Aorta (tissue), 5 donors: ENCODE measurements at regions of chr19 and their contacts with region 1.

Region 1: GRCh38 chr19:2610637-2611482 is 91.6 kb downstream of the GNG7 start:
- DNase-seq: peak; percentile 96 to 99
- ATAC-seq: peak; percentile 94
- H3K4me3 ChIP-seq: peak overlapping the region in 1 of 2 donors; percentile 13
- H3K27ac ChIP-seq: peak overlapping the region; percentile 23 to 94
- H3K4me1 ChIP-seq: no peaks in the 10 kb centered on the region
- H3K27me3 ChIP-seq: no peaks in the 10 kb centered on the region

Region 2: GRCh38 chr19:2427429-2428320 is 183.2 kb before region 1 on chr19 and contains the start of gene TIMM13:
- intact Hi-C with region 1: loop called in 1 of 2 experiments (anchors 5 kb)
- DNase-seq: peak; percentile 98 to 99
- ATAC-seq: peak; percentile 96
- H3K4me3 ChIP-seq: peak within 1 kb of the TSS; percentile 45 to 76
- H3K27ac ChIP-seq: peak within 1 kb of the TSS; percentile 51 to 85
- H3K4me1 ChIP-seq: no peaks in the 10 kb centered on the region
- H3K27me3 ChIP-seq: no peaks in the 10 kb centered on the region
- total RNA-seq, gene TIMM13: 27.8 to 32.7 TPM

Region 3: DNA sequence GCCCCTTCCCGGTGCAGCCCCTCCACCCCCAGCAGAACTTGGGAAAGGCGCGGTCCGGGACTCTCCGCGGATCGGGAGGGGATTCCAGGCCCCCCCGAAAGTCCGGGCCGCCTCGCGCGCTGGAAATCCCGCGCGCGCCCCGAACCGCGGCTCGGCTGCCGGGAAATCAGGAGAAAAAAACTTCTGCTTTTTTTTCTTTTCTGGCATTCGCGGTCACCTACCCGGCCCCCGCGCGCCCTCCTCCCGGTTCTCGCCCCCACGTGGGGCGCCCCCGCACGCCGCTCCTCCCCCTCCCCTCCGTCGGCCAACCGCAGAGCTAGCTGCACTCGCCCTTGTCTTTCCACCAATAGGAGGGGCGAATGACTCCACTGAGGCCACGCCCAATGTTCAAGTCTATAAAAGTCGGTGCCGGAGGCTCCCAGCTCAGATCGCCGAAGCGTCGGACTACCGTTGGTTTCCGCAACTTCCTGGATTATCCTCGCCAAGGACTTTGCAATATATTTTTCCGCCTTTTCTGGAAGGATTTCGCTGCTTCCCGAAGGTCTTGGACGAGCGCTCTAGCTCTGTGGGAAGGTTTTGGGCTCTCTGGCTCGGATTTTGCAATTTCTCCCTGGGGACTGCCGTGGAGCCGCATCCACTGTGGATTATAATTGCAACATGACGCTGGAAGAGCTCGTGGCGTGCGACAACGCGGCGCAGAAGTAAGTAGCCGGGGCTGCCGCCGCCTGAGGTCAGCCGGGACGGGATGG is 135.0 kb before region 1 on chr19 and contains the start of gene GADD45B:
- intact Hi-C with region 1: loop called (anchors 1 to 2 kb)
- DNase-seq: peak; percentile 99
- ATAC-seq: peak; percentile 92
- H3K4me3 ChIP-seq: peak within 1 kb of the TSS; percentile 44 to 87
- H3K27ac ChIP-seq: peak within 1 kb of the TSS; percentile 62 to 95
- H3K4me1 ChIP-seq: no peaks in the 10 kb centered on the region
- H3K27me3 ChIP-seq: no peaks in the 10 kb centered on the region
- total RNA-seq, gene GADD45B: 99.5 to 185 TPM

Region 4: DNA sequence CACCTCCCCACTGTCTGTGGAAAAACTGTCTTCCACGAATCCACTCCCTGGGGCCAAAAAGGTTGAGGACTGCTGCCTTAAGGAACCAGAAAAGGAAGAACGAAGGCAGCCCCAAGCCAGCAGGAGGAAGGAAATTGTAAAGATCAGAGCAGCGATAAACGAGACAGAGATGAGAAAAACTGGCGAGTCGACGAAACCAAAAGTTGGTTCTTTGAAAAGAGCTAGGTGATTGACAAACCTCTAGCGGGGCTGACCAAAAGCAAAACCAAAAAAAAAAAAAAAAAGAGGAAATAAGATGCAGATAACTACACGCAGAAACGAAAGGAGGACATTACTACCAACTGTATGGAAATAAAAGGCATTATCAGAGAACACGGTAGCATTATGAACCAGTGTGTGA is 58.0 kb before region 1 on chr19:
- intact Hi-C with region 1: no loop called
- DNase-seq: peak; percentile 14 to 47
- ATAC-seq: no peak
- H3K4me3 ChIP-seq: no peak overlapping the region
- H3K27ac ChIP-seq: no peak overlapping the region
- H3K4me1 ChIP-seq: no peaks in the 10 kb centered on the region
- H3K27me3 ChIP-seq: no peaks in the 10 kb centered on the region

Region 5: GRCh38 chr19:2627319-2627829 is 16.5 kb after region 1 on chr19:
- intact Hi-C with region 1: loop called in 1 of 2 experiments (anchors 1 kb)
- DNase-seq: peak; percentile 92 to 94
- ATAC-seq: peak; percentile 81
- H3K4me3 ChIP-seq: no peak overlapping the region
- H3K27ac ChIP-seq: peak overlapping the region in 1 of 2 donors; percentile 81
- H3K4me1 ChIP-seq: no peaks in the 10 kb centered on the region
- H3K27me3 ChIP-seq: no peaks in the 10 kb centered on the region

Region 6: DNA sequence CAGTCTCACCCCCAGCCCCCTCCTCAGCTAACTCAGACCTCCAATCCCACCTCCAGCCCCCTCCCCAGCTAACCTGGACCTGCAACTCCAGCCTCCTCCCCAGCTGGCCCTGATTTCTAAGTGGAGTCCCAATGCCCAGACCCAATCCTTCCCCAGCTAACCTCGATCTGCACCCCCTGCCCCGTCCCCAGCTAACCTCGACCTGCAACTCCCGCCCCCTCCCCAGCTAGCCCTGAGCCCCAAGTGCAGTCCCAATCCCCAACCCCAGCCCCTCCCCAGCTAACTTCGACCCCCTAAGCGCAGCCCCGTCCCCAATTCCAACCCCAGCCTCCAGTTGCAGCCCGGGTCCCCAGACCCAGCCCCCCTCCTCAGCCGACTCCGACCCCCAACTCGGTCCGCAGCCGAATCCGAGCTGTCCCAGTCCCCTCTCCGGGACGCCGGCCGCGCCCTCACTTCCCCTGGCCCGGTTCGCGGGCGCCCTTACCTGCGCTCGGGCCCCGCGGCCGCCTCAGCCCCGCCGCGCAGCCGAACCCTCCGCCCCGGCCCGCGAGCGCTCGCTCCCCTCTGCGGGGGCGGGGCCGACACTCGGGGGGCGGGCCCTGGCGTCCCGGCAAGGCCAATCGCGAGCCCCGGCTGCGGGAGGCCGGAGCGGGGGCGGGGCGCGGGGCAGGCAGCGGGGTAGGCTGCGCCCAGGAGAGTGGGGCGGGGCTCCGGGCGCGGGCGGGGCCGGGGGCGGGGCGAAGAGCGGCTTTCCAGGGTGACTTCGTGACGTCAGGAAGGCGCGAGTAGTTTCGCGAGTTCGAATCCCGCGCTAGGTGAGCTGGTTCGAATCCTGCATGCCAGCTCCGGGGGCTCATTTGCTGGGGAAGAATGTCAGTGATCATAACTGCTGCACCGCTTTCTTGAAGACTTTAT is 91.6 kb after region 1 on chr19 and contains the start of gene GNG7:
- intact Hi-C with region 1: no loop called
- DNase-seq: peak; percentile 96 to 97
- ATAC-seq: peak; percentile 97
- H3K4me3 ChIP-seq: peak within 1 kb of the TSS; percentile 11 to 14
- H3K27ac ChIP-seq: no peak within 1 kb of the TSS
- H3K4me1 ChIP-seq: no peaks in the 10 kb centered on the region
- H3K27me3 ChIP-seq: no peaks in the 10 kb centered on the region
- total RNA-seq, gene GNG7: 2.4 to 6.0 TPM